ENCODE measurements at regions of chr19 and their contacts with region 1.

Region 1: DNA sequence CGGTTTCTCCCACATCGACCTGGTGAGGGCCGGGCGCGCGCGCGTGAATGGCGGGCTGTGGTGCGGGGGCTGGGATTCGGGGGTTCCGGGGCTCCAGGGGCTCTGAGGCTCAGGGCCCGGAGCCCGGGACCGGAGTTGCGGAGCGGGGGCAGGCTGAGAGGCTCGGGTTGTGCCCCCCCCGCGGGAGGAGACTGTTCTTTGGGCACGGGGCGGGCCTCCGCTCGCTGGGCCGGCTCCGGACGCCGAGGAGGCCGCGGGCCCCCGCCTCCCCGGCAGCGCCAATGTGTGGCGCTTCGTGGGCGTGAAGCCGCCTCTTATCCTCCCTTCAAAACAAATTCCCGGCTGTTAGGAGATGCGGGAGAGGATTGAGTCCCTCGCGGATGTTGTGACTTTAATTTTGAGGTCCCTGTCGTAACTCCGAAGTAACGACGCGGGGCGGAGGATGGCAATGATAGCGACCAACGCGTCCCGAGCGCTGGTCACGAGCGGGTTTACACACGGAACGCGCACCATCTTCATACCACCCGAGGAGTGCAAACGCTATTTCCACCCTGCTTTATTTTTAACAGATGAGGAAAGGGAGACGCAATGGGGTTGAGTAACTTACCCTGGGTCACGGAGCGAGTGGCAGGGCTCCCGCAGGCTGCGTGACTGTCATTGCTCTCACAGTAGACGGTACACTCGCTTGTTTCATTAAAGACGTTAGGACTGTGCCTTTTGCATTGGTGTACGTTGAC is 536 bp downstream of the UBA2 start:
- H3K4me3 Mint-ChIP-seq: peak overlapping the region; percentile 88
- H3K27ac Mint-ChIP-seq: peak overlapping the region; percentile 85
- H3K4me1 Mint-ChIP-seq: peaks cover 13% of the 10 kb centered on the region
- H3K27me3 Mint-ChIP-seq: no peaks in the 10 kb centered on the region

Region 2: GRCh38 chr19:34364830-34365462 is 63.8 kb before region 1 on chr19 and contains the start of gene GPI:
- intact Hi-C with region 1: loop called (anchors 5 kb)
- H3K4me3 Mint-ChIP-seq: peak within 1 kb of the TSS; percentile 95
- H3K27ac Mint-ChIP-seq: peak within 1 kb of the TSS; percentile 76
- H3K4me1 Mint-ChIP-seq: peaks cover 52% of the 10 kb centered on the region
- H3K27me3 Mint-ChIP-seq: no peaks in the 10 kb centered on the region

Region 3: GRCh38 chr19:34404109-34404897 is 24.4 kb before region 1 on chr19 and contains the start of gene PDCD2L:
- intact Hi-C with region 1: loop called (anchors 2 kb)
- H3K4me3 Mint-ChIP-seq: peak within 1 kb of the TSS; percentile 97
- H3K27ac Mint-ChIP-seq: peak within 1 kb of the TSS; percentile 83
- H3K4me1 Mint-ChIP-seq: peaks cover 17% of the 10 kb centered on the region
- H3K27me3 Mint-ChIP-seq: no peaks in the 10 kb centered on the region

Measured in dendritic cell treated with granulocyte-macrophage colony-stimulating factor and Interleukin-4, amounts not matched to agents 40 ng/mL and 50 ng/mL, for 4 days (primary cell).